GM10248 (cell line): ENCODE measurements at regions of chr4 and their contacts with region 1.

Region 1: DNA sequence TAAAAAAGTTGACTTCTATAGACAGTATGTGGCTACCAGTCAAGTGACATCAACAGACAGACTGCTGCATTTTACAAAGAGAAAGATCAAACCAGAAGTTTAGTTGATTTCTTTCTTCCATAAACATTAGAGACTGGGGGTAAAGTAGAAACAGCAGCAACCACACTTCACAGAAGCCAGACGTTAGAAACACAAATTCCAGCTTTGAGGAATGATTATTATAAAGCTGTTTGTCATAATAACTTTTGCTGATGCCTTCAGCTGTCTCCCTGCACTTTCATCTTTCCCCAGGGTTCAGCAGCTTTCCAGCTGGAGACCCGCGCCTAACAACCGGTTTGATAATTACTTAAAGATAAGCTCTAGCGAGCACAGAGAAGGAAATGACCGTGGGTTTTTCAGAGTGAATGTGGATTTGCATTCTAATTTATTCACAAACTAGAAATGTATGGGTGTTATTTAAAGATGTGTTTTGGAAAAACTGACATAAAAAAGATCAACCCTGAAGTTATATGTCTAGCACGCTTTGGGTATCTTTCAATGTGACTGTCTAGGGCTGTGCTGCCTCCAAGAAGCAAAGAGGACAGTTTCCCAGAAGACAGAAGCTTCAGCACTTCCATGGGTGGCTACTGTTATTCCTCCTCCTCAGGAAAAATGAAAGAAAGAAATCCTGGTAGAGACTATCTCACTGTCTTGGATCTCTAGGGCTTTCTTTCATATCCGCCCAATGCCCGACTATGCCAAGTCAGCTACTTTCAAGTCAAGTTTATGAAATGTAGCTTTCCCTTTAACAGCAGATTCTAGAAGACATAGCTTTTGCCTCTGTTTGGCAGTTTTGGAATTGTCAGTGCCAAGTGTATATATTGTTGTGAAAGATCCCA is 15.0 kb upstream of the ENAM start:
- DNase-seq: no peak
- CTCF ChIP-seq: no peak

Region 2: DNA sequence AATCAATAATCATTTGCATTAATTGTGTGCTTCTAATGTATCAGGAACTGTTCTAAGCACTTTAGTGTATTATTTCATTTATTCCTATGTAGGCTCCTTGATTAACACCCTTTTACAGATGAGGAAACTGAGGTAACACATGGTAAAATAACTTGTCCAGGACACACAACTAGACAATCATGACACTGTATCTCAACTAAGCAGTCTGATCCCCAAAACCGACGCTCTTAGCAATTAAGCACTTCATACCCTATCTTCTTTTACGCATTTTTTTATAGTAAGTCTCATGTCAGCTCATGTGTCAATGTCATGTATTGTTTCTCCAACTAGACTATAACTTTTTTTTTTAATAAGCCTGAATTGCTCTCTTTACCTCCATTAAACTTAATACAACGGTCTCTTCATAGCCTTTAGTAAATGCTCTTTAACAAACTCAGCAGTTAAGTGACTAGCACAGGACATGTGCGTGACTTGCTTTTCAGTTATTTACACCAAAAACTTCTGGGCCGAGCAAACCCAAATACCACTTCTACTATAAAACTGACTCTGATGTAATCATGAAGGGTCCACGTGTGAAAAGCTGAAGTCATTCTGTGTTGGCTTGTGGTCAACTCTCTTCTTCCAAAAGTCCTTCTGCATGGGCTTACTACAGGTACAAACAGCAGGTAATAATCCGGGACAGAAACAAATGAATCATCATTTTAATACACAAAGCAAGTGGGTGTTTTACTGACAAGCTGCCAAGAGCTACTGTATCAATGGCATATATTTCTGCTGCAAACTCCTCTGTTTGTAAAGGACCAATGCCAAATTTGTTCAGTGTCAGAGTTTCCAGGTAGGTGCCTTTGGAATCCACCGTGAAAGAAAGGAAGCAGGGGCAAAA is 29.4 kb before region 1 on chr4:
- CTCF ChIA-PET with region 1: no interaction called
- POLR2A ChIA-PET with region 1: no interaction called
- DNase-seq: no peak
- CTCF ChIP-seq: no peak

Region 3: GRCh38 chr4:70601422-70602039 is 12.0 kb before region 1 on chr4:
- CTCF ChIA-PET with region 1: interaction called, 20 read pairs
- POLR2A ChIA-PET with region 1: no interaction called
- DNase-seq: peak; percentile 63
- CTCF ChIP-seq: peak; percentile 85